IMR-90 (cell line): ENCODE measurements at regions of chr1 and their contacts with region 1.

Region 1: DNA sequence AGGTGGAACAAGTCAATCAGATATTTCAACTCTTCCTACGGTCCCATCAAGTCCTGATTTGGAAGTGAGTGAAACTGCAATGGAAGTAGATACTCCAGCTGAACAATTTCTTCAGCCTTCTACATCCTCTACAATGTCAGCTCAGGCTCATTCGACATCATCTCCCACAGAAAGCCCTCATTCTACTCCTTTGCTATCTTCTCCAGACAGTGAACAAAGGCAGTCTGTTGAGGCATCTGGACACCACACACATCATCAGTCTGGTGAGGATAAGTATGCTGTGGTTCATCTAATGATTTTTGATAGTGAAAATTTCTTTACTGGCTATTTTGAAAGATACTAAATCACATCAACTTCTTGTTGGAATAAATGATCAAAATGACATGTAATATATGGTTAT is 67.7 kb upstream of the MPC2 start:
- DNase-seq: no peak
- ATAC-seq: no peak
- H3K4me3 ChIP-seq: no peak overlapping the region
- H3K27ac ChIP-seq: no peak overlapping the region
- H3K4me1 ChIP-seq: no peaks in the 10 kb centered on the region
- H3K27me3 ChIP-seq: no peaks in the 10 kb centered on the region
- CTCF ChIP-seq: no peak
- POLR2A ChIP-seq: no peak
- RAD21 ChIP-seq: no peak

Region 2: GRCh38 chr1:167862432-167863076 is 142.0 kb before region 1 on chr1:
- CTCF ChIA-PET with region 1: no interaction called
- POLR2A ChIA-PET with region 1: no interaction called
- dilution Hi-C with region 1: no loop called
- in situ Hi-C with region 1: no loop called
- intact Hi-C with region 1: no loop called
- DNase-seq: peak; percentile 90
- ATAC-seq: peak; percentile 90
- H3K4me3 ChIP-seq: no peak overlapping the region
- H3K27ac ChIP-seq: peak overlapping the region; percentile 62
- H3K4me1 ChIP-seq: peaks cover 7% of the 10 kb centered on the region
- H3K27me3 ChIP-seq: no peaks in the 10 kb centered on the region
- CTCF ChIP-seq: no peak
- POLR2A ChIP-seq: no peak
- RAD21 ChIP-seq: no peak

Region 3: GRCh38 chr1:168019407-168019806 is 14.9 kb after region 1 on chr1:
- CTCF ChIA-PET with region 1: no interaction called
- POLR2A ChIA-PET with region 1: interaction called, 10 read pairs
- dilution Hi-C with region 1: no loop called
- in situ Hi-C with region 1: no loop called
- intact Hi-C with region 1: no loop called
- DNase-seq: no peak
- ATAC-seq: no peak
- H3K4me3 ChIP-seq: no peak overlapping the region
- H3K27ac ChIP-seq: no peak overlapping the region
- H3K4me1 ChIP-seq: no peaks in the 10 kb centered on the region
- H3K27me3 ChIP-seq: no peaks in the 10 kb centered on the region
- CTCF ChIP-seq: no peak
- POLR2A ChIP-seq: no peak
- RAD21 ChIP-seq: no peak

Region 4: GRCh38 chr1:168054117-168054516 is 49.6 kb after region 1 on chr1:
- CTCF ChIA-PET with region 1: no interaction called
- POLR2A ChIA-PET with region 1: no interaction called
- dilution Hi-C with region 1: no loop called
- in situ Hi-C with region 1: no loop called
- intact Hi-C with region 1: loop called (anchors 10 kb)
- DNase-seq: no peak
- ATAC-seq: no peak
- H3K4me3 ChIP-seq: no peak overlapping the region
- H3K27ac ChIP-seq: no peak overlapping the region
- H3K4me1 ChIP-seq: peaks cover 3% of the 10 kb centered on the region
- H3K27me3 ChIP-seq: no peaks in the 10 kb centered on the region
- CTCF ChIP-seq: no peak
- POLR2A ChIP-seq: no peak
- RAD21 ChIP-seq: no peak

Region 5: GRCh38 chr1:168386949-168387586 is 382.5 kb after region 1 on chr1:
- CTCF ChIA-PET with region 1: no interaction called
- POLR2A ChIA-PET with region 1: no interaction called
- dilution Hi-C with region 1: no loop called
- in situ Hi-C with region 1: no loop called
- intact Hi-C with region 1: no loop called
- DNase-seq: no peak
- ATAC-seq: no peak
- H3K4me3 ChIP-seq: no peak overlapping the region
- H3K27ac ChIP-seq: no peak overlapping the region
- H3K4me1 ChIP-seq: no peaks in the 10 kb centered on the region
- H3K27me3 ChIP-seq: peaks cover 8% of the 10 kb centered on the region
- CTCF ChIP-seq: no peak
- POLR2A ChIP-seq: no peak
- RAD21 ChIP-seq: no peak